ENCODE measurements at regions of chr18 and their contacts with region 1.

Region 1: DNA sequence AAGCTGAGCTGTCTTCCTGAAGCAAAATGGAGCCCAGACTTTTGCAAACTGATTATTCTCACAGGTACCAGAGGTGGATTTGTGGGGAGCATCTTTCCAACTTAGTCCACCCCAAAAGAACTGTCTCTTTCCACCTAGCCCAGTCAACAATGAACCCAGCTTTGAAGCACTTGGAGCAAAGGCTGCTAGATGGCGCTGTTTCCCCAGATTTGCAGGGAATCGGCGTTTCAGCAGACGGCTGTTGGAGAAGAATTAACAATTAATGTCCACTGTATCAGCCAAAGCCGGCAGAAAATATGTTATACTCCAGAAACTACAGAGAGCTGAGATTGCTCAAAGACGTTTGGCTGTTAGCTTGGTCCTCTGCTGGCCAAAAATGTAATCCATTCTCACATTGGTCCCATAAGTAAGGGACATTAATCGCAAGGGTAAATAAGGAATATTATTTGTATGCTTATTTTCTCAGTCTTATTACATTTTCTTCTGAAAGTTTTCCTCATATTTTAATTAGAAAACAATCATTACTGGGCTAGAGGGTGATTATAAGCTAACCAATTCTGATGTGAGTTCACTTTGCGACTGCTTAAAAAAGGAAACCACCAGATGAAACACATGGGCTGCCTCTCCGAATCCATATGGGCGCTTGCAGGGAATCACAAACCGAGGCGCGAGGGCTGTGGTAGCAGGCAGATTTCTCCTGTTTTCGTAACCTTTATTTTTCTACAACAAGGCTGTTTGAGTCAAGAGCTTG is 423.8 kb upstream of the MEX3C start:
- DNase-seq: peak; percentile 12
- ATAC-seq: peak; percentile 90
- H3K4me3 ChIP-seq: no peak overlapping the region
- H3K27ac ChIP-seq: no peak overlapping the region
- H3K4me1 ChIP-seq: no peaks in the 10 kb centered on the region
- H3K27me3 ChIP-seq: no peaks in the 10 kb centered on the region
- CTCF ChIP-seq: peak; percentile 87 to 92 (median 90)
- EP300 ChIP-seq: no peak
- POLR2A ChIP-seq: no peak
- RAD21 ChIP-seq: peak; percentile 98

Region 2: GRCh38 chr18:52190631-52191030 is 569.3 kb after region 1 on chr18:
- CTCF ChIA-PET with region 1: no interaction called
- POLR2A ChIA-PET with region 1: no interaction called
- RAD21 ChIA-PET with region 1: no interaction called
- SMC1A ChIA-PET with region 1: no interaction called
- in situ Hi-C with region 1: no loop called
- intact Hi-C with region 1: no loop called
- DNase-seq: no peak
- ATAC-seq: no peak
- H3K4me3 ChIP-seq: no peak overlapping the region
- H3K27ac ChIP-seq: no peak overlapping the region
- H3K4me1 ChIP-seq: no peaks in the 10 kb centered on the region
- H3K27me3 ChIP-seq: no peaks in the 10 kb centered on the region
- CTCF ChIP-seq: no peak
- EP300 ChIP-seq: no peak
- POLR2A ChIP-seq: no peak
- RAD21 ChIP-seq: no peak

Region 3: DNA sequence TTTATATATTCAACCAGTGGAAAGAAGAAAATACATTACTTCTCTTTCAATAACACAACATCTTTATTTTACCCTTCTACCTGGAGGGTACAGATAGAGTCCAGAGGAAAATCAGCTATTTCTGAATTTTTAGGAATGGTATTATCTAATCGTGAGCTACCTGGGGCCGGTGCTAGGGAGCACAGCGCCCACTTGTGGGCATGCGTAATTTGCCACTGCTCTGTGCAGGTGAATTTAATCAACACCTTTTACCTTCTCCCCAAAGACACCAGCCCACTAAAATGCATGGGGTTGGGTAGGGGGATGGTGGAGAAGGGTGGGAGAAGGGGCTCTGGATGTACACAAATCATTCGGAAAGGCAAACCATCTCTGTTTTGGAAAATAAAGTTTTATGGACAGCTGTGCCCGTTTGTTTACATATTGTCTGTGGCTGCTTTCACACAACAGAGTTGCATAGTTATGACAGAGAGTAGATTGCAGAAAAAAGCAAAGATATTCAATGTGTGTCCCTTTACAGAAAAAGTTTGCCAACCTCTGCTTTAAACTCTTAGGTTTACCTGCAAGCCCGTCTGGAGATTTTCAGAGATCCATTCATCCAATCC is 667.2 kb after region 1 on chr18:
- CTCF ChIA-PET with region 1: interaction called, 38 read pairs
- POLR2A ChIA-PET with region 1: interaction called, 3 read pairs
- RAD21 ChIA-PET with region 1: interaction called, 26 read pairs
- SMC1A ChIA-PET with region 1: interaction called, 17 read pairs
- in situ Hi-C with region 1: no loop called
- intact Hi-C with region 1: loop called (anchors 1 kb)
- DNase-seq: no peak
- ATAC-seq: peak; percentile 94
- H3K4me3 ChIP-seq: no peak overlapping the region
- H3K27ac ChIP-seq: no peak overlapping the region
- H3K4me1 ChIP-seq: no peaks in the 10 kb centered on the region
- H3K27me3 ChIP-seq: no peaks in the 10 kb centered on the region
- CTCF ChIP-seq: peak; percentile 88 to 93 (median 88)
- EP300 ChIP-seq: no peak
- POLR2A ChIP-seq: no peak
- RAD21 ChIP-seq: peak; percentile 92

Region 4: DNA sequence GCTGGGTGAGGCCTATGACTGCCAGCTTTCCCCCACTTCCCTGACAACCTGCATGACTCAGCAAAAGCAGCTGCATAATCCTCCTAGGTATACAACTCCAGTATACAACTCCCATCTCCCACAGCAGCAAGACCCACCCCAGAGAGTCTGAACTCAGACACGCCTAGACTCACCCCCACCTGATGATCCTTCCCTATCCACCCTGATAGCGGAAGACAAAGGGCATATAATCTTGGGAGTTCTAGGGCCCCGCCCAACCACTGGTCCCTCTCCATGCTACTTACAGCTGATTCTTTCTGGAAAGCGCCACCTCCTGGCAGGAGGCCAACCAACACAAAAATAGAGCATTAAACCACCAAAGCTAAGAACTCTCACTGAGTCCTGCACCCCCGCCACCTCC is 1015.2 kb after region 1 on chr18:
- CTCF ChIA-PET with region 1: interaction called, 3 read pairs
- POLR2A ChIA-PET with region 1: no interaction called
- RAD21 ChIA-PET with region 1: no interaction called
- SMC1A ChIA-PET with region 1: no interaction called
- in situ Hi-C with region 1: no loop called
- intact Hi-C with region 1: loop called (anchors 10 kb)
- DNase-seq: no peak
- ATAC-seq: no peak
- H3K4me3 ChIP-seq: no peak overlapping the region
- H3K27ac ChIP-seq: no peak overlapping the region
- H3K4me1 ChIP-seq: no peaks in the 10 kb centered on the region
- H3K27me3 ChIP-seq: no peaks in the 10 kb centered on the region
- CTCF ChIP-seq: peak in 1 of 3 experiments; percentile 12; a peak in 2 of 6 replicates
- EP300 ChIP-seq: no peak
- POLR2A ChIP-seq: no peak
- RAD21 ChIP-seq: no peak

Region 5: GRCh38 chr18:52694804-52695203 is 1073.5 kb after region 1 on chr18:
- CTCF ChIA-PET with region 1: interaction called, 3 read pairs
- POLR2A ChIA-PET with region 1: no interaction called
- RAD21 ChIA-PET with region 1: no interaction called
- SMC1A ChIA-PET with region 1: no interaction called
- in situ Hi-C with region 1: no loop called
- intact Hi-C with region 1: loop called (anchors 10 kb)
- DNase-seq: no peak
- ATAC-seq: peak; percentile 69
- H3K4me3 ChIP-seq: no peak overlapping the region
- H3K27ac ChIP-seq: no peak overlapping the region
- H3K4me1 ChIP-seq: no peaks in the 10 kb centered on the region
- H3K27me3 ChIP-seq: no peaks in the 10 kb centered on the region
- CTCF ChIP-seq: peak; percentile 31 to 39 (median 36); a peak in 3 of 6 replicates
- EP300 ChIP-seq: no peak
- POLR2A ChIP-seq: no peak
- RAD21 ChIP-seq: peak; percentile 25; the same call in 1 of the 2 replicates

Region 6: GRCh38 chr18:52903857-52904256 is 1282.6 kb after region 1 on chr18:
- CTCF ChIA-PET with region 1: interaction called, 4 read pairs
- POLR2A ChIA-PET with region 1: no interaction called
- RAD21 ChIA-PET with region 1: interaction called, 3 read pairs
- SMC1A ChIA-PET with region 1: interaction called, 3 read pairs
- in situ Hi-C with region 1: no loop called
- intact Hi-C with region 1: loop called (anchors 5 kb)
- DNase-seq: no peak
- ATAC-seq: peak; percentile 82
- H3K4me3 ChIP-seq: no peak overlapping the region
- H3K27ac ChIP-seq: no peak overlapping the region
- H3K4me1 ChIP-seq: no peaks in the 10 kb centered on the region
- H3K27me3 ChIP-seq: no peaks in the 10 kb centered on the region
- CTCF ChIP-seq: peak; percentile 46 to 55 (median 46)
- EP300 ChIP-seq: no peak
- POLR2A ChIP-seq: no peak
- RAD21 ChIP-seq: peak; percentile 63

Region 7: DNA sequence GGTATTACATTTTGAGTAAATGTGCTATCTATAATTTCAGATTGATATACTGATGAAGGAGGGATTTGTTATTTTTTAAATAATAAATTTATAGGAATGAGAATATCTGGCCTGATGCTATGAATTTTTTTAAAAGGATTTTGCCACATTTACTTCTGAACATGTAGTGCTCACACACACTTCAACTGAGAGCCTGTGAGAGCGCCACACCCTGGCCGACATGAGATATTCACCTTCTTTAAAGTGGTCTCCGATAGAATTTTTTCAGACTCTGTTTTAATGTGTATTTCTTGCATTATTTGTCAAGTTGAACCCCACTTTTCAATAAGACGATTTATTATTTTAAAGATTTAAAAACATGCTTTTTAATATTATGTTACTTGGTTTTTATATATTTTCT is 1532.0 kb after region 1 on chr18:
- CTCF ChIA-PET with region 1: interaction called, 3 read pairs
- POLR2A ChIA-PET with region 1: no interaction called
- RAD21 ChIA-PET with region 1: no interaction called
- SMC1A ChIA-PET with region 1: interaction called, 3 read pairs
- in situ Hi-C with region 1: no loop called
- intact Hi-C with region 1: loop called (anchors 10 kb)
- DNase-seq: no peak
- ATAC-seq: peak; percentile 57; the same call in 1 of the 3 replicates
- H3K4me3 ChIP-seq: no peak overlapping the region
- H3K27ac ChIP-seq: no peak overlapping the region
- H3K4me1 ChIP-seq: no peaks in the 10 kb centered on the region
- H3K27me3 ChIP-seq: no peaks in the 10 kb centered on the region
- CTCF ChIP-seq: peak; percentile 27 to 49 (median 32); a peak in 2 of 6 replicates
- EP300 ChIP-seq: no peak
- POLR2A ChIP-seq: no peak
- RAD21 ChIP-seq: peak; percentile 16; the same call in 1 of the 2 replicates